PC-3 (cell line): ENCODE measurements at regions of chr13 and their contacts with region 1.

Region 1: DNA sequence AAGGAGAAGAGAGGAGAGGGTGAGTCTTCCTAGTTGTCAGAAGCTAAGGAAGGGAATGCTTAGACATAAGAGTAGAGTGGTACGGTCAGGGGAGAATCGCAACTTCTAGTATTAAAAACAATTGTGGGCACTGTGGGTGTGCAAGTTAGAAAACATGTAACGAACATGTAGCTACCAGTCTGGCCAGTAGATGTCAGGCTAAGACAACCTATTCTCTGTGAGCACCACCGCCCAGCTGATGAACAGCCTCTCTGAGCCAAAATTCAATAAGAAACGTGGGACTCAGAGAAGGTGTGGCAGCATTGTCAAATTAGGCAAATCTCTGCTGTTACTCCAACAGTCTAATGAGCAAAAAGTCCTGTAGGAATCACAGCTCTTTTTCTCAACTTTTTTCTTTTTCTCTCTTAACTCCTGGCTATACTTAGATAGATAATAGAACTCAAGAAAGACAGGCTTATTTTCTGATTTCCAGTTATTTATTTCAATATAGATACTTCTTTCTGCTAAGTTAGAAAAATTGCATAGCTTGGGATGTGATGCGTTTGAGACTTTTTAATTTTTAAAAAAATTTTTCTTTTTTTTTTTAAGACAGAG is 186.2 kb downstream of the USP12 start:
- DNase-seq: peak; percentile 87
- ATAC-seq: peak; percentile 63
- H3K4me3 ChIP-seq: peak overlapping the region; percentile 52
- H3K27ac ChIP-seq: peak overlapping the region; percentile 22; the same call in 1 of the 2 replicates
- H3K4me1 ChIP-seq: peaks cover 25% of the 10 kb centered on the region
- H3K27me3 ChIP-seq: no peaks in the 10 kb centered on the region
- CTCF ChIP-seq: peak; percentile 86

Region 2: DNA sequence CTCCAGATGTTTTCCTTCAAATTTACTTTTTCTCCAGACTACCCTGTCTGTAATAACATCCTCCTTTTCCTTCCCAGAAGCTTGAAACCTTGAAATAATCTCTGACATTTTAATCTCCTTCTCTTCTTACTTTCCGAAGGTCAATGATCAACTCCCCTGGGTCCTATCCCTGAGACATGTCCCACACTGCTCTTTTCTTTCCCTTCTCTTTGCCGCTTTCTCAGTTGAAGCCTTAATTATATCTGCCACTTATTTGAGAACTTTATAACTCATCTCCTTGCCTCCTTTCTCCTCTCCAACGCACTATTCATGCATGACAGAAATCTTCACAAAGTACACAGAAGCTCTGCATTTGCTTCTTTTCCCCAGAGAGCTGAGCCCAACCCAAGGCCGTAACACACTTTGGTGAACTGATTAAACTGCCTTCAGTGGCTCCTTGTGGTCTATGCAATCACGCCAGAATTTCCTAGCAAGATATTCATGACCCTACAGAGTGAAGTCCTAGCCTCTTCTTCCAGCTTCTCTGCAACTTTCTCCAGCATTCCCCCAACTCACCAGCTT is 437.1 kb before region 1 on chr13:
- CTCF ChIA-PET with region 1: no interaction called
- POLR2A ChIA-PET with region 1: no interaction called
- intact Hi-C with region 1: no loop called
- DNase-seq: no peak
- ATAC-seq: no peak
- H3K4me3 ChIP-seq: no peak overlapping the region
- H3K27ac ChIP-seq: no peak overlapping the region
- H3K4me1 ChIP-seq: peaks cover 4% of the 10 kb centered on the region; the same call in 1 of the 2 replicates
- H3K27me3 ChIP-seq: peaks cover 37% of the 10 kb centered on the region
- CTCF ChIP-seq: no peak

Region 3: GRCh38 chr13:26946684-26947343 is 38.6 kb before region 1 on chr13:
- CTCF ChIA-PET with region 1: interaction called, 14 read pairs
- POLR2A ChIA-PET with region 1: no interaction called
- intact Hi-C with region 1: loop called (anchors 1 kb)
- DNase-seq: peak; percentile 70
- ATAC-seq: peak; percentile 96
- H3K4me3 ChIP-seq: no peak overlapping the region
- H3K27ac ChIP-seq: no peak overlapping the region
- H3K4me1 ChIP-seq: peaks cover 4% of the 10 kb centered on the region; the same call in 1 of the 2 replicates
- H3K27me3 ChIP-seq: no peaks in the 10 kb centered on the region
- CTCF ChIP-seq: peak; percentile 81

Region 4: DNA sequence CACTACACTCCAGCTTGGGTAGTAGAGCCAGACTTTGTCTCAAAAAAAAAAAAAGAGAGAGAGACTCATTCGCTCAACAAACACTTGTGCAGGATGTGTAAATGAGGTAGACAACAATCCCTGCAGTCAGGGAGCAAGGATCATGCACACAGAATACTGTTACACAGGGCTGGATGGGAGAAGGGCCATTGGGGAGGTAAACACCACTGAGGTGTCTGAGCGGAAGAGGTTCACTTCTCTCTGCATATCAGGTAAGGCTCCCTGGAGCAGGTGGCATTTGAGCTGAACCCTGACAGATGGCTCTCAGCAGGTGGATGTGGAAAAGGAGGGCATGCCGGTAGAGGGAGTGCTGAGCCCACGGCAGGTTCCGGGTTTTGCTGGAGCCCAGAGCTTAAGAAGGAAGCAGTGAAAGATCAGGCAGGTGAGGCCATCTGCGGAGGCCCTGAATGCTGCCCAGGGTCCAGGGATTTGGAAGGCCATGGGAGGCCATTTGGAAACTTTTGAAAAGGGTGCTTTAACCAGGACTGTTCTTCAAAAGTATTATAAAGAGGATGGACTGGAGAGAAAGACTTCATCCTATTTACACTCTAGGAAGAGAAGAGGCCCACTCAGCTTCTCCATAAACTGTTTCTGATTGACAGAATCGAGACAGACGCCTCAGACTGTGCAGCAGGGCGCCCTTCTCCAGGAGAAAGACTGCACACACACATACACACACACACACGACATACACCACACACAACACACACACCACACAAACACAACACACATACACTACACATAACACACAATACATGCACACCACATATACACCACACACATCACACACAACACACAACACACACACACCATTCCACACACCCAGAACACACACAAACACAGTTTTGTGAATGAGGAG is 13.1 kb before region 1 on chr13:
- CTCF ChIA-PET with region 1: interaction called, 20 read pairs
- POLR2A ChIA-PET with region 1: interaction called, 4 read pairs
- intact Hi-C with region 1: loop called (anchors 1 kb)
- DNase-seq: peak; percentile 64
- ATAC-seq: peak; percentile 93
- H3K4me3 ChIP-seq: no peak overlapping the region
- H3K27ac ChIP-seq: no peak overlapping the region
- H3K4me1 ChIP-seq: no peaks in the 10 kb centered on the region
- H3K27me3 ChIP-seq: no peaks in the 10 kb centered on the region
- CTCF ChIP-seq: peak; percentile 75

Region 5: DNA sequence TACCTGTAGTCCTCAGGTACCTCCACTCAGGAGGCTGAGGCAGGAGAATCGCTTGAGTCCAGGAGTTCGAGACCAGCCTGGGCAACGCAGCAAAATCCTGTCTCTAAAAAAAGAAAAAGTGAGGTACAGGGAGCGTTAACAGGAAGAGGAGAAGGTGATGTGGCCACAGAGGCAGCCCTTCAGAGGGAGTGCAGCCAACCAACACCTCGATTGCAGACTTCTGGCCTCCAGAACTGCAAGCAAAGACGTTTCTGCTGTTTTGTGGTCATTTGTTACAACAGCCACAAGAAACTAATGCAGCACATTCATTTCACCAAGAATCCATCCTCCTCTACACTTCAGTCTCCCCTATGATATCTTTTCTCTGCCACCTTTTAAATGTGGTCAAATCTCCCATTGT is 41.0 kb after region 1 on chr13:
- CTCF ChIA-PET with region 1: no interaction called
- POLR2A ChIA-PET with region 1: no interaction called
- intact Hi-C with region 1: no loop called
- DNase-seq: no peak
- ATAC-seq: no peak
- H3K4me3 ChIP-seq: no peak overlapping the region
- H3K27ac ChIP-seq: no peak overlapping the region
- H3K4me1 ChIP-seq: peaks cover 49% of the 10 kb centered on the region
- H3K27me3 ChIP-seq: no peaks in the 10 kb centered on the region
- CTCF ChIP-seq: no peak

Region 6: DNA sequence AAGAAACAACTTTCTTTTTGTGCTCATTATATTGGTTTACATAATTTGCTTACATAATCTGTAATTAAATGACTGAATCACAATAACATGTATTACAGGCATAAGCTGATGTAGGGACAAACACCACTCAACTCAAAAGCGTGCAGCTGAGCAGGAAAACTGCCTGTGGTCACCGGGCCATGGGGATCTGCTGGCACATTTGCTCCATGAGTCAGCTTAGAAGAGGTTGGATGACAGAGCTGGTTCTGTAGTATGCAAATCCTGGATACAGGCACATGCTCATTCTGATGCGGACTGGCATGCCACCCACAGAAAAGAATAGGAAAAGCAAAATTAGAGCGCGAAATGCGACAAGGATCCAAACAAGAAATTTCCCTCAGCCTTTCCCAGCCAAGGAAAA is 57.6 kb after region 1 on chr13:
- CTCF ChIA-PET with region 1: no interaction called
- POLR2A ChIA-PET with region 1: no interaction called
- intact Hi-C with region 1: loop called (anchors 2 kb)
- DNase-seq: peak; percentile 93
- ATAC-seq: peak; percentile 83
- H3K4me3 ChIP-seq: no peak overlapping the region
- H3K27ac ChIP-seq: peak overlapping the region; percentile 83
- H3K4me1 ChIP-seq: peaks cover 47% of the 10 kb centered on the region
- H3K27me3 ChIP-seq: no peaks in the 10 kb centered on the region
- CTCF ChIP-seq: no peak

Region 7: DNA sequence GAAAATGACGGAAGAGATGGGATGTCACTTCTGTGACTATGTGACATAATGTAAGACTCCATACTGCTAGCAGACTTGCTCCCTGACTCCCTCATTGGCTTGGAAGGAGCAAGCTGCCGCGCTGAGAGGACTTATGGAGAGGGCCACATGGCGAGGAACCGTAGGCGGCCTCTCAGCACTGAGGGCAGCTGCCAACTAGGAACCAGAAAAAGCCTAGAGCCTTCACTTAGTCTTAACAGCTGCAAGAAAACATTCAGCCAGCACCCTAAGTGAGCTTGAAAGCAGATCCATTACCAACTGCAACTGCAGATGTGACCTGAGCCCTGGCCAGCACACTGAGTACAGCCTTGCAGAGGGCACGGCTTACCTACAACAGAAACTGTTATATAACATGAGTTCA is 152.4 kb after region 1 on chr13:
- CTCF ChIA-PET with region 1: no interaction called
- POLR2A ChIA-PET with region 1: no interaction called
- intact Hi-C with region 1: no loop called
- DNase-seq: no peak
- ATAC-seq: no peak
- H3K4me3 ChIP-seq: no peak overlapping the region
- H3K27ac ChIP-seq: no peak overlapping the region
- H3K4me1 ChIP-seq: peaks cover 9% of the 10 kb centered on the region
- H3K27me3 ChIP-seq: no peaks in the 10 kb centered on the region
- CTCF ChIP-seq: no peak

Region 8: DNA sequence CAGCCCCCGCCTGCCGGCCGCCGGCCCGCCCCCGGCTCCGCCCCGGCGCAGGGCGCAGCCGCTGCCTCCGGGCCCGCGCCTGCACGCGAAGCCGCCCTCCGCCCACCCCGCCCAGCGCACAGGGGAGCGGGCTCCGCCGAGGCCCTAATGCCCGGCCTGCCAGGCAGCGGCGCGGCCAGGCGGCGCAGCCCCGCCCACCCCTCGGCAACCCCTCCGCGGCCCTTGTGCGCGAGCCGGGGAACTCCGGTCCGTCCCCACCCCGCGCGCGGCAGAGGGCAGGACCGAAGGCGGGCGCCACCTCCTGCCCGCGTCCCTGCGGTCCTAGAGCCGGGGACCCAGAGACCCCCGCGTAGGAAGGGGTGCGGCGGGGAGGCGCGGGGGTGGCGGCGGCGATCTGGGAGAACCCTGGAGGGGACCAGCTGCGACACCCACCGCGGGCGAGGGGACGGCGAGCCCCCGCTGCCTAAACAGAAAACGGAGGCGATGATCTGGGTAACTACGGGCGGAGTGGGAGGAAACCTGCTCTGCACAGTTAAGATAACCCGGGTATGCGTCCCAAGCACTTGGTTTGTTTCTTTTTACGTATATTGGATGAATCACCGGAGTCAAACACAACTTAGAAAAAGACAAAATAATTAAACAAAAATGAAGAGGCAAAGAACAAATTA is 186.6 kb after region 1 on chr13:
- CTCF ChIA-PET with region 1: interaction called, 15 read pairs
- POLR2A ChIA-PET with region 1: interaction called, 3 read pairs
- intact Hi-C with region 1: loop called (anchors 2 kb)
- DNase-seq: peak; percentile 86
- ATAC-seq: peak; percentile 88
- H3K4me3 ChIP-seq: peak overlapping the region; percentile 87
- H3K27ac ChIP-seq: peak overlapping the region; percentile 68
- H3K4me1 ChIP-seq: peaks cover 34% of the 10 kb centered on the region
- H3K27me3 ChIP-seq: no peaks in the 10 kb centered on the region
- CTCF ChIP-seq: no peak

Region 9: GRCh38 chr13:27203854-27204253 is 218.5 kb after region 1 on chr13:
- CTCF ChIA-PET with region 1: no interaction called
- POLR2A ChIA-PET with region 1: no interaction called
- intact Hi-C with region 1: loop called (anchors 1 kb)
- DNase-seq: peak; percentile 29
- ATAC-seq: peak; percentile 63
- H3K4me3 ChIP-seq: no peak overlapping the region
- H3K27ac ChIP-seq: no peak overlapping the region
- H3K4me1 ChIP-seq: peaks cover 22% of the 10 kb centered on the region
- H3K27me3 ChIP-seq: no peaks in the 10 kb centered on the region
- CTCF ChIP-seq: peak; percentile 47

Region 10: GRCh38 chr13:27283906-27284493 is 298.6 kb after region 1 on chr13:
- CTCF ChIA-PET with region 1: interaction called, 4 read pairs
- POLR2A ChIA-PET with region 1: interaction called, 4 read pairs
- intact Hi-C with region 1: loop called (anchors 1 kb)
- DNase-seq: peak; percentile 59
- ATAC-seq: peak; percentile 83
- H3K4me3 ChIP-seq: no peak overlapping the region
- H3K27ac ChIP-seq: no peak overlapping the region
- H3K4me1 ChIP-seq: peaks cover 17% of the 10 kb centered on the region
- H3K27me3 ChIP-seq: no peaks in the 10 kb centered on the region
- CTCF ChIP-seq: peak; percentile 66